ENCODE measurements at regions of chr11 and their contacts with region 1.

Region 1: GRCh38 chr11:103326070-103326794 is 217.0 kb downstream of the DYNC2H1 start:
- DNase-seq: peak; percentile 50 to 76
- H3K4me3 ChIP-seq: no peak overlapping the region
- H3K4me3 Mint-ChIP-seq: no peak overlapping the region
- H3K27ac Mint-ChIP-seq: no peak overlapping the region
- H3K4me1 ChIP-seq: peaks cover 6% of the 10 kb centered on the region; the same call in 1 of the 2 replicates
- H3K4me1 Mint-ChIP-seq: peaks cover 12% of the 10 kb centered on the region
- H3K27me3 ChIP-seq: no peaks in the 10 kb centered on the region
- H3K27me3 Mint-ChIP-seq: no peaks in the 10 kb centered on the region
- CTCF ChIP-seq: peak; percentile 83 to 86

Region 2: DNA sequence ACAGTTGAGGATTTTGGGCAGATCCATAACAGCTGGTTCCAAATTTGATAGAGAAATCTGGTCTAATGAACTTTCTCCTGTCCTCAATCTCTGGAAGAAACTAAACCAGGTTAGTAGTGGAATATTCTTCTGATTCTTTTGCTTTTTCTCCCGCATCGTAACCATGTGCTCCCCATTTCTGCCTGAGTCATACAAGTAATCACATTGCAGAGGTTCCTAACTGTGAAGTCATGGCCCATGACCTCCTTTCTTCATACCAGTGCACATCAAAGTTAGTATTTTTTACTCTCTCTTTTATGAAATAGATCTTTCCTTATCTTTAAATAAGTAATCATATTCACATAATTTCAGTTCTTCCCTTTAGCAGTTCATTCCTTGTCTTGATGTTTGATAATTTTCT is 32.0 kb after region 1 on chr11:
- CTCF ChIA-PET with region 1: no interaction called
- POLR2A ChIA-PET with region 1: no interaction called
- intact Hi-C with region 1: no loop called
- DNase-seq: peak in 1 of 2 experiments; percentile 20
- H3K4me3 ChIP-seq: no peak overlapping the region
- H3K4me3 Mint-ChIP-seq: no peak overlapping the region
- H3K27ac Mint-ChIP-seq: peak overlapping the region; percentile 73
- H3K4me1 ChIP-seq: peaks cover 25% of the 10 kb centered on the region
- H3K4me1 Mint-ChIP-seq: peaks cover 32% of the 10 kb centered on the region
- H3K27me3 ChIP-seq: no peaks in the 10 kb centered on the region
- H3K27me3 Mint-ChIP-seq: no peaks in the 10 kb centered on the region
- CTCF ChIP-seq: no peak

Region 3: DNA sequence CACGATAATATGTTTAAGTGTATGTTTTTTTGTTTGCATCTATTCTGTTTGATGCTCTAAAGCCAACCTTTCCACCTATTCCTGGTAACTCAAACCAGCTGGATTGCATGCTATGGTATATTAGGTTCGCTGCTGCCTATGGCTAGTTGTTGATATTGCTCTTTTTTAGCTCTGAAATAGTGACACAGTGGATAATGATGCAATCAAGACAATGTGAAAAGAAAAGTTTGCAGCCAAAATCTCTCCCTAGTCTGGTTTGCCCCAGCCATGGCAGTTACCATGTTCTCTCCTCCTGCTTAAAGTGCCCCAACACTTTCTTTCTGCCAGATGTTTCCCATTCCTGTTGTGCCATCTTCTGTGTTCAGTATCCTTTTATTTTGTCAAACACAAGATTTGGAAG is 52.7 kb after region 1 on chr11:
- CTCF ChIA-PET with region 1: no interaction called
- POLR2A ChIA-PET with region 1: no interaction called
- intact Hi-C with region 1: no loop called
- DNase-seq: no peak
- H3K4me3 ChIP-seq: no peak overlapping the region
- H3K4me3 Mint-ChIP-seq: no peak overlapping the region
- H3K27ac Mint-ChIP-seq: peak overlapping the region; percentile 62
- H3K4me1 ChIP-seq: no peaks in the 10 kb centered on the region
- H3K4me1 Mint-ChIP-seq: no peaks in the 10 kb centered on the region
- H3K27me3 ChIP-seq: no peaks in the 10 kb centered on the region
- H3K27me3 Mint-ChIP-seq: no peaks in the 10 kb centered on the region
- CTCF ChIP-seq: no peak

Region 4: GRCh38 chr11:103450241-103450640 is 124.0 kb after region 1 on chr11:
- CTCF ChIA-PET with region 1: no interaction called
- POLR2A ChIA-PET with region 1: no interaction called
- intact Hi-C with region 1: loop called (anchors 1 kb)
- DNase-seq: no peak
- H3K4me3 ChIP-seq: no peak overlapping the region
- H3K4me3 Mint-ChIP-seq: no peak overlapping the region
- H3K27ac Mint-ChIP-seq: no peak overlapping the region
- H3K4me1 ChIP-seq: no peaks in the 10 kb centered on the region
- H3K4me1 Mint-ChIP-seq: no peaks in the 10 kb centered on the region
- H3K27me3 ChIP-seq: no peaks in the 10 kb centered on the region
- H3K27me3 Mint-ChIP-seq: no peaks in the 10 kb centered on the region
- CTCF ChIP-seq: no peak

Measured in Caco-2 (cell line).